GM23248 (cell line): ENCODE measurements at regions of chr6 and their contacts with region 1.

Region 1: GRCh38 chr6:43769526-43770416 is at the start of gene VEGFA:
- DNase-seq: peak; percentile 95
- H3K4me3 ChIP-seq: peak within 1 kb of the TSS; percentile 90
- H3K27ac ChIP-seq: peak within 1 kb of the TSS; percentile 82
- H3K4me1 ChIP-seq: peaks cover 18% of the 10 kb centered on the region
- H3K27me3 ChIP-seq: no peaks in the 10 kb centered on the region
- total RNA-seq, gene VEGFA: 197 and 241 TPM in 2 replicates

Region 2: DNA sequence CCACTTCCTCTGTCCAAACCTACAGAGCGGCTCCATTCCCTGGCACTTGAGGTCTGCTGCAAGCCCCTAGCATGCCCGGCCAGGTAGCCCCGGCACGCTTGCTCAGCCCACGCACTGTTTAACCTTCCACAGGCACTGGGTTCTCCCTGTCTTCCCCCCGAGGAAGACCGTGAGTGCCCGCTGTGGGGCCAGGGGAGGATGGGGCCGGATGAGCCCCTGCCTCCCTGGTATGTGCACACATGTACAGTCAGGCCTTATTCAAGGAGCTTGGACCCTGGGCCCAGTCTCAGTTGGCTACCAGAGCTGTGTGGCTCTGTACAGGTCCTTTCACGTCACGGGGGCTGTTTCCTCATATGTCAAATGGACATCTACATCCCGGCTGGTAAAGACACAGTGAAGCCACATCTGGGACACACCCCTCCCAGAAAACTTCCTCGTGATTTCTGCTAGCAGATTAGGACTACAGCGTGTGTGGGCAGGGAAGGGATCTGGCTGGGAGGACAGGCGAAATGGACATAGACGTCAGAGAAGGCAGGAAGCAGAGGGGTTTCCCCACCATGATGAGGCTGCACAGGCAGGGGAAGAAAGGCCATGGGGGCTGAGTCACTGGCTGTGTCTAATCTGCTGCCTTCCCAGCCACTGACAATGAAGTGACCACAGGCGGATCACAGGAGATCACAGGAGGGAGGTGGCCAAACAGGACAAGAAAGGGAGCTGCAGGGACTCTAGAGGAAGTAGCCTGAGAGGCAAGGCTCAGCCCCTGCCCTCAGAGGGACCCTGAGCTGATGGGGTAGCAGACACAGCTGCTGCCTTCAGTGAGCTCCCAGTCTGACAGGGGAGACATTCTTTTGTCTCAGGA is 294.5 kb after region 1 on chr6:
- in situ Hi-C with region 1: loop called (anchors 10 kb)
- DNase-seq: peak; percentile 97
- H3K4me3 ChIP-seq: no peak overlapping the region
- H3K27ac ChIP-seq: peak overlapping the region; percentile 65
- H3K4me1 ChIP-seq: peaks cover 48% of the 10 kb centered on the region
- H3K27me3 ChIP-seq: no peaks in the 10 kb centered on the region

Region 3: GRCh38 chr6:44086931-44087574 is 317.3 kb after region 1 on chr6:
- in situ Hi-C with region 1: loop called (anchors 10 kb)
- DNase-seq: peak; percentile 43
- H3K4me3 ChIP-seq: no peak overlapping the region
- H3K27ac ChIP-seq: no peak overlapping the region
- H3K4me1 ChIP-seq: no peaks in the 10 kb centered on the region
- H3K27me3 ChIP-seq: no peaks in the 10 kb centered on the region